GM10248 (cell line): ENCODE measurements at regions of chr13 and their contacts with region 1.

Region 1: GRCh38 chr13:112587212-112587763 is 665 bp downstream of the TUBGCP3 start:
- DNase-seq: peak; percentile 84
- CTCF ChIP-seq: peak; percentile 13

Region 2: GRCh38 chr13:112575675-112576074 is 11.6 kb before region 1 on chr13:
- CTCF ChIA-PET with region 1: interaction called, 24 read pairs
- POLR2A ChIA-PET with region 1: no interaction called
- DNase-seq: no peak
- CTCF ChIP-seq: no peak

Region 3: DNA sequence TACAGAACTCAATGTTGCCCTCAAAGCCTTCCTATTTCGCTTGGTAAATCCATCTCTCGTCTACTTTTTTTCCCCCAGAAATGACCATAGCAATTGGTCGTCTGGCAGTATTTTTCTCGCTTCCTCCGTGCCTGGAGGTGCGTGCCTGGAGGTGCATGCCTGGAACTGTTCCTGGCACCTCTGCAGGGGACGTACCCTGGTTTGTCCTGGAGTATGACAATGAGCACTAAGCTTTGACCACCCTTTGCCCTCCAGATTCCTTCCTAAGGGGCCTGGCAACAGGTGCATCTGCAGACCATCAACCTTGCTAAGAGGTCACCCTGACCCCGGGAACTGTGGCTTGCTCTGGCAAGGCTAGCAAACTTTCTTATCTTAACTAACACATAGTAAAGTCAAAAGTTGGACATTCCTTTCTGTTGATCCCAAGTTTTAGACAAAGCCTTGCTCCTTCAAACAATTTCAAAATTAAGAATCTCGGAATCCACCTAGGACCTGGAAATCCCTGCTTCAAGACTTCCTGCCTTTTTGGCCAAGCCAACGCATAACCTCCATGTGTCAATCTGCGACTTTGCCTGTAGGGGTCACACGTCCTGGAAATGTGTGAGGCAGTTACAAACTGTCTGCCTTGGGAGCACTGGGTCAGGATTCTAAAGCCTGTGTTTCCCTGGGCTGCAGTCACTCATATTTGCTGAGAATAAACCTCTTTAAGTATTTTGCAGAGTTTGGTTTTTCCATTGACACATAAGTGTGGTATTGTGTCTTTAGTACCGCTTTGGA is 29.5 kb after region 1 on chr13:
- CTCF ChIA-PET with region 1: no interaction called
- POLR2A ChIA-PET with region 1: no interaction called
- DNase-seq: peak; percentile 68
- CTCF ChIP-seq: peak; percentile 58